ENCODE measurements at regions of chr1 and their contacts with region 1.

Region 1: DNA sequence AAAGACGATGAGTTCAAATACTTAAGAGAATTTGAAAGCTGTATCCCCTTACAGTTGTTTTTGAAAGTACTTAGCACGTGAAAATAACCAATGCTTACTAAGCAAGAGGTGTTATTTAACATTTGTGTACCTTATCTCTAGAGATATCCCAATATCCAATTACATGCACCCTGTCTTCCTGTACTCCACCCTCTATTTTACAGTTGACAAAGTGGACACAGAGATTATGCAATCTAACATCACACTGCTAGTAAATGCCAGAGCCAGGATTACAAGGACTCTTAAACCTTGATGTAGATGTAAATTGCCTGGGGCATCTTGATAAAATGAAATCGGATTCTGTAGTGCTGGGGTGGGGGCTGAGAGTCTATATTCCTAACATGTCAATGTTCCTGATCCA is 72.0 kb downstream of the GDAP2 start:
- DNase-seq: no peak
- ATAC-seq: no peak
- H3K4me3 ChIP-seq: no peak overlapping the region
- H3K27ac ChIP-seq: no peak overlapping the region
- H3K4me1 ChIP-seq: no peaks in the 10 kb centered on the region
- H3K27me3 ChIP-seq: no peaks in the 10 kb centered on the region
- CTCF ChIP-seq: no peak
- EP300 ChIP-seq: no peak
- POLR2A ChIP-seq: no peak
- RAD21 ChIP-seq: no peak

Region 2: DNA sequence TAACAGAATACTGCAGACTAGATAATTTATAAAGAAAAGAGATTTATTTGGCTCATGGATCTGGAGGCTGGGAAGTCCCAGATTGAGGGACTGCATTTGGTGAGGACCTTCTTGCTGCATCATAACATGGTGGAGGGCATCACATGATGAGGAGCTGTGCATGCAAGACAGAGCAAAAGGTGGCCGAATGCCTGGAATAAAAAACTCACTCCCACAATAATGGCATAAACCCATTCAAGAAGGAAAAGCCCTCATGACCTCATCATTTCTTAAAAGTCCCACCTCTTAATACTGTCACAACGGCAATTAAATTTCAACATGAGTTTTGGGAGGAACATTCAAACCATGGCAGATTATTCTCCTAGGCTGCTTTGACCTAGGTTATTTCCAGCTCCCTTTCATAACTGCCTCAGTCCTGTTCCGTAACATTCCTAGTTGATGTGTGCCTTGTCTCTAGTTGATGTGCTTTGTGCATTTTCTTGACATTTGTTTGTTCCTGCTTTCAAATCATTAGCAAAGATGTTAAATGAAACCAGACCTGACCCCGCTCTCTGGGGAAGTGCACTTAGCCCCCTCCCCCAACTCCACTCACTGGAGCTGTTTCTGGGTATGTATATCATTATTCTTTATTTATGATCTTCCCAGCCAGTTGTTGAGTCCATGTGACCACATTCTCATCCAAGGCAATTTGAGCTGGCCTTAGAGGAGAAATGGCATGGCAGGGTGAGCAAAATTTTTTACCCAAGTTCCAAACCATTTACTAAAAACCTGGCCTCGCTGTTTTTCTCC is 76.6 kb before region 1 on chr1:
- CTCF ChIA-PET with region 1: no interaction called
- POLR2A ChIA-PET with region 1: no interaction called
- RAD21 ChIA-PET with region 1: no interaction called
- SMC1A ChIA-PET with region 1: no interaction called
- in situ Hi-C with region 1: no loop called
- intact Hi-C with region 1: loop called (anchors 5 kb)
- DNase-seq: no peak
- ATAC-seq: no peak
- H3K4me3 ChIP-seq: no peak overlapping the region
- H3K27ac ChIP-seq: no peak overlapping the region
- H3K4me1 ChIP-seq: no peaks in the 10 kb centered on the region
- H3K27me3 ChIP-seq: no peaks in the 10 kb centered on the region
- CTCF ChIP-seq: no peak
- EP300 ChIP-seq: no peak
- POLR2A ChIP-seq: no peak
- RAD21 ChIP-seq: no peak

Region 3: DNA sequence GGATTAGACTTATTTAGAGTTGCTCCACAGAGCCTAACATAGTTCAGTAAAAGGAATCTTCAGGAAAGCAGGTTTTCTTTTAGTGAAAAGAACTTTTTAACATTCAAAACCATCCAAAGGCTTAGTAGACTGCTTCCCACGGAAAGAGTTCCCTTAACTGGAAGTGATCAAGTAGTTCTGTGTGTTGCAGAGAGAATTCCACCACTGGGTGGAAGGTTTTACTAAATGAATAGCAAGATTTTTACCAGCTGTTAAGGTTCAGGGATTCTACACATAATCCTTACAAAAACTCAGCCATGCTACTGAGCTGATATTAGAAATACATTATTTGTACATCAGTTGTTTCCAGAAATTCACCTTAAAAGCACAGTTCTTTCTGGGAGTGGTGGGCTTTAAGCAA is 47.7 kb before region 1 on chr1:
- CTCF ChIA-PET with region 1: no interaction called
- POLR2A ChIA-PET with region 1: no interaction called
- RAD21 ChIA-PET with region 1: no interaction called
- SMC1A ChIA-PET with region 1: no interaction called
- in situ Hi-C with region 1: loop called (anchors 5 kb)
- intact Hi-C with region 1: no loop called
- DNase-seq: no peak
- ATAC-seq: no peak
- H3K4me3 ChIP-seq: no peak overlapping the region
- H3K27ac ChIP-seq: no peak overlapping the region
- H3K4me1 ChIP-seq: no peaks in the 10 kb centered on the region
- H3K27me3 ChIP-seq: peaks cover 0 to 2% of the 10 kb centered on the region in 2 experiments; a peak in 1 of 4 replicates
- CTCF ChIP-seq: no peak
- EP300 ChIP-seq: no peak
- POLR2A ChIP-seq: no peak
- RAD21 ChIP-seq: no peak

Measured in GM12878 (cell line).